ENCODE measurements at regions of chr21 and their contacts with region 1.

Region 1: DNA sequence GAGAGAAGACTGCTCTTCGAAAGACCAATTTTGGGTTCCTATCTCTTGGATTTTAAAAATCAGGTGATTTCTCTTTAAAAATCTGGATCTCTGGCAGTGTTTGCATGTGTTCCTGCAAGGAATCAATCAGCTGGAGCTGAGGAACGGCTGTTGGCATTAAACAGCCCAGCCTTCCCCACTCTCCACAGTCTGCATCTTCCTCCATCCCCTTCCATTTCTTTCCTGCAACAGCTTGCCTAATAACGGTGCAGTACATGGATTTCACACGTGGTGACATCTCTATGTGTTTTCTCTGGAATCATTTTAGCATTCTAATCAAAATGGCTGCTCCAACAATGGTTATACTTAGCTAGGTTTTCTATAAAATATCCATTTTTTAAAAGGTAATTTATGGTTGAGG is 20.0 kb downstream of the RIPPLY3 start:
- DNase-seq: no peak
- H3K4me3 ChIP-seq: no peak overlapping the region
- H3K27ac ChIP-seq: no peak overlapping the region
- H3K4me1 ChIP-seq: peaks cover 0 to 4% of the 10 kb centered on the region in 2 experiments; a peak in 1 of 4 replicates
- H3K27me3 ChIP-seq: peaks cover 11% of the 10 kb centered on the region; the same call in 1 of the 2 replicates
- CTCF ChIP-seq: no peak
- EP300 ChIP-seq: no peak
- RAD21 ChIP-seq: no peak

Region 2: GRCh38 chr21:36776981-36777617 is 249.4 kb before region 1 on chr21:
- CTCF ChIA-PET with region 1: no interaction called
- POLR2A ChIA-PET with region 1: no interaction called
- DNase-seq: no peak
- H3K4me3 ChIP-seq: no peak overlapping the region
- H3K27ac ChIP-seq: no peak overlapping the region
- H3K4me1 ChIP-seq: peaks cover 0 to 5% of the 10 kb centered on the region in 2 experiments; a peak in 1 of 4 replicates
- H3K27me3 ChIP-seq: no peaks in the 10 kb centered on the region
- CTCF ChIP-seq: no peak
- EP300 ChIP-seq: no peak
- RAD21 ChIP-seq: no peak

Region 3: DNA sequence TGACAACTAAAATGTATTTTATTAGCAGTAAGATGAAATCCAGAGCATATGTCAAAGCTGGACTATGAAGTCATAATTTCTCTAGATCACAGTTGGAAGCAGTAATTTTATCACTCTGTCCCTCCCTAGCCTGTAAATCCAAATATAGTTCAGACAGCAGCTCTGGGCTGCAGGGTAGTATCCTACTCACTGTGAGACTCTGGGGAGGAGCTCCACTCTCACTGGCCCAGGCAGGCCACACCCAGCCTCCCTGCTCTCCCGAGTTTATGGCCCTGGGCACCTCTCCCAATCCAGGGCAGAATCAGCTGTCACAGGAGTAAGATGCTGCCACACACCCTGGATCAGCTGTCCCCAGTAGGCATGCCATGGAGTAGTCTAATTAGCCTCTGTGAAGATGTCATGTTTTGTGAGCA is 191.1 kb before region 1 on chr21:
- CTCF ChIA-PET with region 1: no interaction called
- POLR2A ChIA-PET with region 1: no interaction called
- DNase-seq: peak; percentile 22
- H3K4me3 ChIP-seq: no peak overlapping the region
- H3K27ac ChIP-seq: no peak overlapping the region
- H3K4me1 ChIP-seq: peaks cover 0 to 4% of the 10 kb centered on the region in 2 experiments; a peak in 1 of 4 replicates
- H3K27me3 ChIP-seq: no peaks in the 10 kb centered on the region
- CTCF ChIP-seq: no peak
- EP300 ChIP-seq: no peak
- RAD21 ChIP-seq: no peak

Region 4: DNA sequence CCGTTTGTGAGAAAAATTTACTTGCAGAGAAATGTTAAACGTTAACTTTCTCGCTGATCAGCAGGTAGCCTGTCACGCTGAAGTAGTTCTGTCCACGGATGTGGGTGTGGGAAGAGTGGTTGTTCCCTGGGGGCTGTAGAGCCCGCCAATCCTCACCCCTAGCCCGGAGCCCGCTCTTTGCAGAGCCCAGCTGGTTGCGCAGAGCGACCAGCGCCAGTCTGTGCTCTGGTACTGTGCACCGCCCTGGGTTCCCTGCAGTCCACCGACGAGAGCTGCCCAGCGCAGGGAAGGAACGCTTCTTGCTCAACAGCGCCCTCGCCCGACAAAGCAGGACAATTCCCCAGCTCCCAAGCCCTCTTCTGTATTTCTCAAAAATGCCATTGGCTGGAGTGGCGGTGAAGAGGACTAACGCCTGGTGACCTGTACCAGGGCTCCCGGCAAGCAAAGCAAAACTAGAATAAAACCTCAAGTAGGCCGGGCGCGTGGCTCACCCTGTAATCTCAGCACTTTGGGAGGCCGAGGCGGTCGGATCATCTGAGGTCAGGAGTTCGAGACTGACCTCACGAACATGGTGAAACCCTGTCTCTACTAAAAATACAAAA is 16.7 kb before region 1 on chr21:
- CTCF ChIA-PET with region 1: interaction called, 13 read pairs
- POLR2A ChIA-PET with region 1: no interaction called
- DNase-seq: peak; percentile 91
- H3K4me3 ChIP-seq: peak overlapping the region; percentile 36 to 42; a peak in 3 of 4 replicates
- H3K27ac ChIP-seq: no peak overlapping the region; a peak in 1 of 4 replicates
- H3K4me1 ChIP-seq: no peaks in the 10 kb centered on the region; a peak in 1 of 4 replicates
- H3K27me3 ChIP-seq: no peaks in the 10 kb centered on the region; the same call in 1 of the 2 replicates
- CTCF ChIP-seq: peak; percentile 85
- EP300 ChIP-seq: no peak
- RAD21 ChIP-seq: peak; percentile 76